ENCODE measurements at regions of chr1 and their contacts with region 1.

Region 1: GRCh38 chr1:223123011-223123610 is 19.9 kb downstream of the TLR5 start:
- DNase-seq: no peak
- ATAC-seq: no peak
- H3K4me3 ChIP-seq: peak overlapping the region; percentile 39
- H3K4me3 Mint-ChIP-seq: peak overlapping the region; percentile 48 to 90 (median 66)
- H3K27ac ChIP-seq: no peak overlapping the region
- H3K27ac Mint-ChIP-seq: peak overlapping the region in 1 of 9 donors; percentile 23
- H3K4me1 ChIP-seq: peaks cover 0 to 5% of the 10 kb centered on the region in 2 donors
- H3K4me1 Mint-ChIP-seq: peaks cover 0 to 11% (median 9%) of the 10 kb centered on the region in 7 donors
- H3K27me3 ChIP-seq: no peaks in the 10 kb centered on the region
- H3K27me3 Mint-ChIP-seq: peaks cover 0 to 11% (median 0%) of the 10 kb centered on the region in 5 donors

Region 2: DNA sequence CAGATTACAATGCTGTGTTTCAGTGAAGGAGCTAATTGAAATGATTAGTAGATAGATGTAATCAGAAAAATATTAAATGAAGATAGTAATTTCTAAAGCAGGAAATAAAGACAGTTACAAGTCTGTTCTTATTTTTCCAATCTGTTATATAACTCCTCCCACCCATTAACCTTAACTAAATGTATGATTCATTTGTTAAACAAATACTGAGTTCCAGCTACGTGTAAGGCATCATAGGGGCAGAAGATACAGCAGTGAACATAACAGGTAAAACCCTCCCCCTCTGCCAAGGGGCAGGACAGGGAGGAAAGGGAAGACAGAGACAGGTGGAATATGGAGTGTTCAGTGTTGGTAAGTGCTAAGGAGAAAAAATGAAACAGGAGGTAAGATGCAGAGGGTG is 386.1 kb before region 1 on chr1 and contains the start of gene FAM177B:
- CTCF ChIA-PET with region 1: interaction called, 4 read pairs
- POLR2A ChIA-PET with region 1: no interaction called
- intact Hi-C with region 1: loop called (anchors 1 to 2 kb)
- DNase-seq: no peak
- ATAC-seq: no peak
- H3K4me3 ChIP-seq: no peak within 1 kb of the TSS
- H3K4me3 Mint-ChIP-seq: no peak within 1 kb of the TSS
- H3K27ac ChIP-seq: no peak within 1 kb of the TSS
- H3K27ac Mint-ChIP-seq: no peak within 1 kb of the TSS
- H3K4me1 ChIP-seq: no peaks in the 10 kb centered on the region
- H3K4me1 Mint-ChIP-seq: peaks cover 0 to 7% (median 0%) of the 10 kb centered on the region in 7 donors
- H3K27me3 ChIP-seq: no peaks in the 10 kb centered on the region
- H3K27me3 Mint-ChIP-seq: no peaks in the 10 kb centered on the region
- total RNA-seq, gene FAM177B: not detected

Region 3: DNA sequence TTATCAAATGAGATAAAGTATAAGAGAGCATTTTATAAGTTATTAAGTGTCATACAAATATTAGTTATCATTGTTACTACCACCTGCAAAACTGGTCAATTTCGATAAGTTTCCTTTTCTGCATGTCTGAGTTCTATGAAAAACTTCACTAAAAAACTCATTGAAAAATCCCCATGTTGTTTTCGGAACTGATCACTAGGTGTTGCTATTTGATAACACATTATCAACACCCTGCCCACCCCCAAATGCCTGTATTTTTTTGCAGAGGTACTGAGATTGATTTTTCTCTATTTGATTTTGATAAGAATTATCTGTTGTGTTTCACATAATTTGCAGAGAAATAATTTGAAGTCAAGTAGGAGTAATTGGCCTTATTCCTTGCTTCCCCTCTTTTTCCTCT is 330.4 kb before region 1 on chr1:
- CTCF ChIA-PET with region 1: interaction called, 6 read pairs
- POLR2A ChIA-PET with region 1: no interaction called
- intact Hi-C with region 1: loop called (anchors 1 kb)
- DNase-seq: peak in 6 of 9 donors; percentile 7 to 44 (median 27)
- ATAC-seq: no peak
- H3K4me3 ChIP-seq: no peak overlapping the region
- H3K4me3 Mint-ChIP-seq: no peak overlapping the region
- H3K27ac ChIP-seq: no peak overlapping the region
- H3K27ac Mint-ChIP-seq: no peak overlapping the region
- H3K4me1 ChIP-seq: no peaks in the 10 kb centered on the region
- H3K4me1 Mint-ChIP-seq: peaks cover 0 to 17% (median 0%) of the 10 kb centered on the region in 7 donors
- H3K27me3 ChIP-seq: no peaks in the 10 kb centered on the region
- H3K27me3 Mint-ChIP-seq: peaks cover 0 to 2% (median 0%) of the 10 kb centered on the region in 5 donors

Region 4: DNA sequence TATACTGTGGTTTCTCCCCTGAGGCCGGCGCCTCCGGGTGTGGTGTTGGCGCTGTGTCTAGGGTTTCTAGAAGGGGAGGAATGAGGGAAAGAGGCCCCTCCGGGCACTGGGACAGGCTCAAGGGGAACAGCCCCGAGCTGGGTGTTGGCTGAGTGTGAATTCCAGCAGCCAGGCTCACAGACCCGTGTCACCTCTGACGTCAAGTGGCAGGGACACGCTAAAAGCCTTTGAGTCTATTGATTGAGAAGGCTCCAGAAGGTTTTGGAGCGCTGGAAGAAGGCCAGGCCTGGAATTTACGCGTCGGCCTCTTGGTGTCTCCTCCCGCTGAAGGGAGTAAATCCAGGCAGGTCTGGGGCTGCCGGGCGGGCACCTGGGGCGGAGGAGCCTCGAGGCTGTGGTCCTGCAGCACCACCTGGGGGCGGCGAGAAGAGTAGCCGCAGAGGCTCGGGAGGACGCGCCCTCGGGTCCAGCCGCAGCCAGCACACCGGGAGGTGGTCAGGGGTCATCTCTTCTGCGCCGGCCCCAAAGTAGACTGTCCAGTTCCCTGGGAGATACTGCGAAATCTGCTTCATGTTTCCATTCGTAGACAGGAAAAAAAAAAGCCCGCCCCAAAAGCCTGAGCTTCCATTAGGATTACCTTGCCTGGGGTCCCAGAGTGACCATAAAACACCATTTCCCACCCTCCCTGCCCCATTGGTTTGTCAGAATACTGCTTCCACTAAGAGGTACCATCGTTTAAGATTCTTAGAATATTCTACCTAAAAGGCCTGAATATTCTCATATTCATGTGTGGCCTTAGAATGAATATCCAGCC is 41.7 kb before region 1 on chr1:
- CTCF ChIA-PET with region 1: interaction called, 4 read pairs
- POLR2A ChIA-PET with region 1: no interaction called
- intact Hi-C with region 1: loop called in 1 of 2 experiments (anchors 1 kb)
- DNase-seq: peak; percentile 54 to 79 (median 65)
- ATAC-seq: peak; percentile 90
- H3K4me3 ChIP-seq: peak overlapping the region; percentile 57
- H3K4me3 Mint-ChIP-seq: peak overlapping the region; percentile 34 to 77 (median 58)
- H3K27ac ChIP-seq: peak overlapping the region; percentile 39
- H3K27ac Mint-ChIP-seq: peak overlapping the region in 1 of 9 donors; percentile 51
- H3K4me1 ChIP-seq: no peaks in the 10 kb centered on the region
- H3K4me1 Mint-ChIP-seq: no peaks in the 10 kb centered on the region
- H3K27me3 ChIP-seq: no peaks in the 10 kb centered on the region
- H3K27me3 Mint-ChIP-seq: peaks cover 2 to 9% (median 4%) of the 10 kb centered on the region in 5 donors

Region 5: GRCh38 chr1:223133824-223134435 is 10.8 kb after region 1 on chr1:
- CTCF ChIA-PET with region 1: interaction called, 24 read pairs
- POLR2A ChIA-PET with region 1: no interaction called
- intact Hi-C with region 1: no loop called
- DNase-seq: peak; percentile 59 to 84 (median 73)
- ATAC-seq: peak; percentile 92
- H3K4me3 ChIP-seq: peak overlapping the region; percentile 41
- H3K4me3 Mint-ChIP-seq: peak overlapping the region; percentile 51 to 84 (median 74)
- H3K27ac ChIP-seq: no peak overlapping the region
- H3K27ac Mint-ChIP-seq: peak overlapping the region in 1 of 9 donors; percentile 41
- H3K4me1 ChIP-seq: peaks cover 4 to 12% of the 10 kb centered on the region in 2 donors
- H3K4me1 Mint-ChIP-seq: peaks cover 13 to 31% (median 22%) of the 10 kb centered on the region in 7 donors
- H3K27me3 ChIP-seq: no peaks in the 10 kb centered on the region
- H3K27me3 Mint-ChIP-seq: peaks cover 0 to 68% (median 5%) of the 10 kb centered on the region in 5 donors

Region 6: DNA sequence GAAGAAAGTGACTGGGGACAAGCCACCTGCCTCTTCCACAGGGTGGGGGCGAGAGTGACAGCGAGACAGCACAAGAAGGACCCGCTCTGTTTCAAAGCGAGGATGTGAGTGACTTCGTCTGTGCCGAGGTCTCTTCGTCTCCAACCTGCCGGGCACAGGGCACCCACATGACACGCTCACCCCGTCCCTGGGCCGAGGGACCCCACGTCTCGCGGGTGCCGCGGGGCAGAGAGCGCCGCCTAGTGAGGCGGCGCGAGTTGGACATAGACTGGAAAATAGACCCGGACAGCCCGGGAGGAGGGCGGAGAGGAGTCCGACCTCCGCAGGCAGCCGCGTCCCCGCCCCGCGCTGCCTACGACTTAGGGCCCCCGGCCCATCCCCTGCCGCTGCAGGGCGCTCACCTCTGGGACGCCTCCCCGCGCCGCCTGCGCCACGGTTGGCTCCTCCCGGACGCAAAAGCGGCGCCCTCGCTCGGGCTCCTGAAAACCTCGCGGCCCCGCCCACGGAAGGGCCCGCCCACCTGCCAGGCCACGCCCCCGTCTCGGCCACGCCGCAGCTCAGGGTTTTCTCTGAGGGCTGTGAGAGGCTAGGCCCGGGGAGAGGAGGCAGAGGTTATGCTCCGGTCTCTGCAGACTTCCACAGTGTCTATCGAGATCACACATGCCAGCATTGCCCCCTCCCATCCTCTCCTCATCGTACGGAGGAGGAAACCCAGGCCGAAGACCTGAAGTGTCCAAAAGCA is 19.9 kb after region 1 on chr1 and contains the start of gene TLR5:
- CTCF ChIA-PET with region 1: interaction called, 14 read pairs
- POLR2A ChIA-PET with region 1: no interaction called
- intact Hi-C with region 1: no loop called
- DNase-seq: peak; percentile 81 to 92 (median 87)
- ATAC-seq: peak; percentile 94
- H3K4me3 ChIP-seq: peak within 1 kb of the TSS; percentile 65
- H3K4me3 Mint-ChIP-seq: peak within 1 kb of the TSS; percentile 69 to 89 (median 81)
- H3K27ac ChIP-seq: peak within 1 kb of the TSS; percentile 69
- H3K27ac Mint-ChIP-seq: peak within 1 kb of the TSS in 8 of 9 donors; percentile 48 to 95 (median 90)
- H3K4me1 ChIP-seq: peaks cover 13 to 15% of the 10 kb centered on the region in 2 donors
- H3K4me1 Mint-ChIP-seq: peaks cover 13 to 35% (median 27%) of the 10 kb centered on the region in 7 donors
- H3K27me3 ChIP-seq: no peaks in the 10 kb centered on the region
- H3K27me3 Mint-ChIP-seq: peaks cover 0 to 10% (median 0%) of the 10 kb centered on the region in 5 donors
- total RNA-seq, gene TLR5: 3.1 to 8.0 (median 6.6) TPM in 4 of 5 experiments, not detected in the other

Measured in naive thymus-derived CD4-positive, alpha-beta T cell (primary cell).